Endothelial cell of umbilical vein (primary cell): ENCODE measurements at regions of chr9 and their contacts with region 1.

Region 1: GRCh38 chr9:14277244-14277643 is 36.7 kb downstream of the NFIB start:
- DNase-seq: peak; percentile 74
- H3K4me3 ChIP-seq: no peak overlapping the region
- H3K27ac ChIP-seq: peak overlapping the region; percentile 79
- H3K4me1 ChIP-seq: peaks cover 75% of the 10 kb centered on the region
- H3K27me3 ChIP-seq: no peaks in the 10 kb centered on the region
- CTCF ChIP-seq: no peak
- POLR2A ChIP-seq: no peak

Region 2: GRCh38 chr9:14298607-14299022 is 21.4 kb after region 1 on chr9:
- CTCF ChIA-PET with region 1: interaction called, 7 read pairs
- POLR2A ChIA-PET with region 1: no interaction called
- dilution Hi-C with region 1: no loop called
- intact Hi-C with region 1: loop called (anchors 2 kb)
- DNase-seq: peak; percentile 68
- H3K4me3 ChIP-seq: no peak overlapping the region
- H3K27ac ChIP-seq: peak overlapping the region; percentile 2
- H3K4me1 ChIP-seq: peaks cover 34% of the 10 kb centered on the region
- H3K27me3 ChIP-seq: no peaks in the 10 kb centered on the region
- CTCF ChIP-seq: no peak
- POLR2A ChIP-seq: no peak